Calu3 (cell line): ENCODE measurements at regions of chr19 and their contacts with region 1.

Region 1: GRCh38 chr19:17475541-17476115 is 5.3 kb downstream of the SLC27A1 start:
- DNase-seq: peak; percentile 90
- H3K4me3 Mint-ChIP-seq: peak overlapping the region; percentile 32
- H3K27ac Mint-ChIP-seq: peak overlapping the region; percentile 95
- H3K4me1 Mint-ChIP-seq: peaks cover 14% of the 10 kb centered on the region
- H3K27me3 Mint-ChIP-seq: no peaks in the 10 kb centered on the region
- CTCF ChIP-seq: no peak

Region 2: GRCh38 chr19:17496337-17496997 is 20.8 kb after region 1 on chr19:
- CTCF ChIA-PET with region 1: interaction called, 11 read pairs
- intact Hi-C with region 1: no loop called
- DNase-seq: peak; percentile 75
- H3K4me3 Mint-ChIP-seq: no peak overlapping the region
- H3K27ac Mint-ChIP-seq: no peak overlapping the region
- H3K4me1 Mint-ChIP-seq: peaks cover 9% of the 10 kb centered on the region
- H3K27me3 Mint-ChIP-seq: no peaks in the 10 kb centered on the region
- CTCF ChIP-seq: peak; percentile 76

Region 3: GRCh38 chr19:17511724-17512573 is 36.3 kb after region 1 on chr19:
- CTCF ChIA-PET with region 1: interaction called, 7 read pairs
- intact Hi-C with region 1: loop called (anchors 5 kb)
- DNase-seq: peak; percentile 78
- H3K4me3 Mint-ChIP-seq: peak overlapping the region; percentile 72
- H3K27ac Mint-ChIP-seq: peak overlapping the region; percentile 77
- H3K4me1 Mint-ChIP-seq: peaks cover 6% of the 10 kb centered on the region
- H3K27me3 Mint-ChIP-seq: no peaks in the 10 kb centered on the region
- CTCF ChIP-seq: no peak